ENCODE measurements at regions of chr5 and their contacts with region 1.

Region 1: DNA sequence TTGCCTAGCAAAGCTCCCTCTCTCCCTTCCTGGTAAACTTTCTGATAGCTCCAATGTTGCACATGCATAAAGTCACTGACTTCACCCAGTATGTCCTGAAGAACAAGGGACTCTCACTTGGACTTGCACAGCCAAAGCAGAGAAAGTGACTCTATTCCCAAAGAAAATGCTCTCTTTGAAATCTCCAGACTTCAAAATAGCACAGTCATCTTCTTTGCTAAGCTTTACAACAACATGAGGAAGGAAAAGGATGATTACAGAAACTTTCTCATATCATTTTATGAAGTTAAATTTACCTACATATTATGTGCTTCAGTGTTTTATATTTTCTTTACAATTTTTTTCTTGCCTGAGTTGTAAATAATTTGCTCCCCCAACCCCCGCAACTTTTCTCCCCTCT is 264.6 kb downstream of the PJA2 start:
- DNase-seq: no peak
- ATAC-seq: no peak
- H3K4me3 ChIP-seq: no peak overlapping the region
- H3K27ac ChIP-seq: no peak overlapping the region
- H3K4me1 ChIP-seq: no peaks in the 10 kb centered on the region
- H3K27me3 ChIP-seq: no peaks in the 10 kb centered on the region
- CTCF ChIP-seq: no peak

Region 2: GRCh38 chr5:108634617-108635288 is 510.4 kb before region 1 on chr5:
- CTCF ChIA-PET with region 1: no interaction called
- POLR2A ChIA-PET with region 1: no interaction called
- in situ Hi-C with region 1: no loop called
- intact Hi-C with region 1: no loop called
- DNase-seq: no peak
- ATAC-seq: no peak
- H3K4me3 ChIP-seq: no peak overlapping the region
- H3K27ac ChIP-seq: no peak overlapping the region
- H3K4me1 ChIP-seq: no peaks in the 10 kb centered on the region
- H3K27me3 ChIP-seq: no peaks in the 10 kb centered on the region
- CTCF ChIP-seq: no peak

Region 3: DNA sequence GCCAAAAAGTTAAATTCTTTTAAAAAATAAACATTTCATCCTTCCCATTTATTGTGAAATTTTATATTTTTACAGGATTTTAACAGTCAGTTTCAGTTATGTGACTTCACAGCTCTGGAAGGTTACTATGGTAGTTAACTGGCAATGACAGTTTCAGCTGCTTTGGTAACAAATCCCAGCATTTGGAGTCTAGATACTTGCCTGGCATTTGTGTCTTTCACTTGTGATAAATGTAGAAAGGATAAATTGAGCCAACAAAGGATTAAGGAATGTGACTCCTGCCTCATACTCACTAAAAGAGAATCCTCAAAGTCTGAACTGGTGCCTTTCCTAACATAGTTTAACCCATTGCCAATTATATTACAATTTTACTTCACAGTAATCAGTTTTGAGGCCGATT is 81.9 kb before region 1 on chr5:
- CTCF ChIA-PET with region 1: no interaction called
- POLR2A ChIA-PET with region 1: no interaction called
- in situ Hi-C with region 1: no loop called
- intact Hi-C with region 1: no loop called
- DNase-seq: no peak
- ATAC-seq: no peak
- H3K4me3 ChIP-seq: no peak overlapping the region
- H3K27ac ChIP-seq: no peak overlapping the region
- H3K4me1 ChIP-seq: no peaks in the 10 kb centered on the region
- H3K27me3 ChIP-seq: no peaks in the 10 kb centered on the region
- CTCF ChIP-seq: no peak

Region 4: GRCh38 chr5:109177227-109177626 is 32.1 kb after region 1 on chr5:
- CTCF ChIA-PET with region 1: no interaction called
- POLR2A ChIA-PET with region 1: no interaction called
- in situ Hi-C with region 1: no loop called
- intact Hi-C with region 1: loop called (anchors 1 kb)
- DNase-seq: no peak
- ATAC-seq: no peak
- H3K4me3 ChIP-seq: no peak overlapping the region
- H3K27ac ChIP-seq: no peak overlapping the region
- H3K4me1 ChIP-seq: no peaks in the 10 kb centered on the region
- H3K27me3 ChIP-seq: no peaks in the 10 kb centered on the region
- CTCF ChIP-seq: no peak

Measured in Panc1 (cell line).